ENCODE measurements at regions of chr13 and their contacts with region 1.

Region 1: GRCh38 chr13:29707876-29708543 is 112.5 kb upstream of the SLC7A1 start:
- DNase-seq: peak; percentile 79
- H3K4me3 ChIP-seq: no peak overlapping the region
- H3K27ac ChIP-seq: no peak overlapping the region
- H3K4me1 ChIP-seq: peaks cover 15% of the 10 kb centered on the region
- H3K27me3 ChIP-seq: no peaks in the 10 kb centered on the region

Region 2: DNA sequence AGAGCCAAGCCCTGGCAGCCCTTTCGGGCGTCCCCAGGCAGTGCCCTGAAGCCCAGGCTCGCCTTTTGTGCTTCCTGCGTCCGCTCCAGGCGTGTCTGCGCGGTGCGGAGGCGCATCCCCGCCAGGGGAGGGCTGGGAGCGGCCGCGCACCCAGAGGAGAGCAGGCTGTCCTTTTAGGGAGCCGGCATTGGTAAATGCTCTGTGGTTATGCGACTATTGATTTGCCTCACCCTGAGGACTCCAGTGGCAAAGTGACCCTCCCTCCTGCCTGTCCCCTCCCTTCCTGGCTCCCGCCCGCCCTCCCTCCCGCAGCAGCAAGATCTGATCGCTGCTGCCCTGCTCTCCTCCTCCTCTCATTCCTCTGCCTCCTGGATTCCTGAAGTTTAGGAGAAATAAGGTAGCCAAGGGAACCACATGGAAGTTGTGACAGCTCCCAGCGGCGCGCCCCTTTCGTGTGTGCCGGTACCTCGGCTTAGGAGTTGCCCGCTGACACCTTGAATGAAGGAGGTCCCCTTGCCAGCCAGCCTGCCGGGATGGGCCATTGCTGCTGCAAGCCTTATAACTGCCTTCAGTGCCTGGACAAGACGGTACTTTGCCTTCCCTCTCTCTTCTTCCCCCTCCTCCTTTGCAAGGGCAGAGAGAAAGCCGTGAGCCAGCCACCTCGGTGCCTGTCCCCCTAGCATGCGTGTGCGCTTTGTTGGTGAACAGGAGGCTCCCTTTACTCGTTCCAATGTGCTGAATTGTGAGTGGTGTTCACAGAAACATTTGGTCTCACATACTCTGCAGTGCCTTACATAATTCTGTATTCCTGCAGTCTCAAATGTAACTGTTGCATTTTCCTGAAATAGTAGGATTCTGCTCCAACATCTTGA is 279.5 kb before region 1 on chr13:
- in situ Hi-C with region 1: no loop called
- DNase-seq: peak; percentile 73
- H3K4me3 ChIP-seq: peak overlapping the region; percentile 75
- H3K27ac ChIP-seq: no peak overlapping the region
- H3K4me1 ChIP-seq: peaks cover 22% of the 10 kb centered on the region
- H3K27me3 ChIP-seq: no peaks in the 10 kb centered on the region

Region 3: DNA sequence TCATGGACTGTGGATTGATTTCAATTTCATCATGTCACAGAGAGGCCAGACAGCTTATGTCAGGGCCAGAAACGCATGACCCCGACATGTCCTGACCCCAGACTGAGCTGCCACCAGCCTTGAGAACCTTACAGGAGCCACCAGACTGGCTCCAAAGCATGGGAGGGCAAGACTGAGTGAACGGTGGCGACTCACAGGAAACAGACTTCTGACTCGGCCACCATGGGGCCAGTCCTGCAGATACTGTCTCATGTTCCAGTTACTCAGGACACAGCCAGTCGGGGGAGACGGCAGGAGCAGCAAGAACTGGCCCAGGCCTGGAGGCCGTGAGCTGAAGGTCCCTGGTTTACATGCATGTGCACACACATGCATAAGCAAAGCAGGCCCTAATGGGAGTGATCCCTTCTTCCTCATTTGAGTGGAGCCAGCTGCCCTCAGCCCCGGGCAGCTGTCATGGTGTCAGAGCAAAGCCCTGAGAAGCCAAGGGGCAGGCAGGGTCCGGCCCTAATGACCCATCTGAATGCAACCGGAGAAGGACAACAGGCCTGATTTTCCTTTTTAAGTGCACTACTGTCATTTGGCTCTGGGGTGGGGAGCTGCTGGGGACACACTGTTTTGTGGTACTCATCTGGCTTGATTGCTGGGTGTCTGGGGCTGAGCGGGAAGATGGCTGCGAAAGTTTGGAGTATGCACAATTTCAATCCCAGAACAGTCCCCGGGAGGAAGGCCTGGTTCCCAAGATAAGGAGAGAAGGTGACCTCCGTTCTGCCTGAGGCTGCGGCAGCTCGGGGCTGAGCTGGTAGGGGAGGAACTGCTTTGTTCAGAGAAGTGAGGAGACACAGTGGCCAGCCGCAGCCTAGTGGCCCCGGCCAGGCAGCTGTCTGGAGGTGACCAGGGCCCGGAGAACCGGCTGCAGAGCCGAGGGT is 194.3 kb before region 1 on chr13:
- in situ Hi-C with region 1: loop called (anchors 10 kb)
- DNase-seq: peak; percentile 84
- H3K4me3 ChIP-seq: no peak overlapping the region
- H3K27ac ChIP-seq: peak overlapping the region; percentile 88
- H3K4me1 ChIP-seq: peaks cover 63% of the 10 kb centered on the region
- H3K27me3 ChIP-seq: no peaks in the 10 kb centered on the region

Measured in GM23248 (cell line).